Activated naive CD4-positive, alpha-beta T cell treated with anti-CD3 and anti-CD28 coated beads for 36 hours (primary cell): ENCODE measurements at regions of chr6 and their contacts with region 1.

Region 1: DNA sequence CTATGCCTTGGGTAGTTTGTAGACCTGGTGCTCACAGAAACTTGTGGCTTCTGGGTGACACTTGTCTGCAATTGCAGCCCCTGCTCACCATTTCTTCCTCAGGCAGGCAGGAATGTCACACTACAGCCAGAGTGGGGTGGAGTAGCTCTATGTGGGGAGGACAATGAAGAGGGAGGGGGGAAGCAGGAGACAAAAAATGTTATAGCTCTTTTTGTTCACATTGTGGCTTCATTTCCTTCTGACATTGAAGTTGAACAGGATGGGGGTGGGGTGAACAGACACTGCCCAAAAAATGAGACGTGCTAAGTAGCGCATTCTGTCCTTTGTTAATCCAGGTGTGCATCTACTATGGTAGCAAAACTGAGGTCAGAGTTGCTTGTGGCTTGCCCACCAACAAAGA is at the start of gene THEMIS:
- DNase-seq: peak; percentile 52
- H3K4me3 Mint-ChIP-seq: peak within 1 kb of the TSS; percentile 81
- H3K27ac Mint-ChIP-seq: peak within 1 kb of the TSS; percentile 94
- H3K4me1 Mint-ChIP-seq: peaks cover 57% of the 10 kb centered on the region
- H3K27me3 Mint-ChIP-seq: no peaks in the 10 kb centered on the region
- total RNA-seq, gene THEMIS: 7.0 to 7.4 TPM

Region 2: DNA sequence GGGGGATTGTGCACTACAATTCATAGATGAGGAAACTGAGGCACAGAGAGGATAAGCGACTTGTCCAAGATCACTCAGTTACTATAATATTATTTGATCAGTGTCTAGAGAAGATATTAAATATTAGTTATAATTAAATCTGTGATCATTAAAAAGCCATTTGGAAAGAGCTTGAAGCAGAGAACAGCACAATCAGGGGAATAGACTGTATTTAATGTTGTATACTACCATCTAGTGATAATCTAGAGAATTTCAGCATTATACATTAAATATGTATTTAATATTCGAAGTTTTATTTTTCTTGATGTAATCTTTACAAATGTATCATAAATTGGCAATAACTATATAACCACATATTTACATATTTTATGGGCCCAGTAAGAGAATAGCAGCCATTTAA is 361.7 kb before region 1 on chr6:
- CTCF ChIA-PET with region 1: no interaction called
- intact Hi-C with region 1: no loop called
- DNase-seq: no peak
- H3K4me3 Mint-ChIP-seq: no peak overlapping the region
- H3K27ac Mint-ChIP-seq: no peak overlapping the region
- H3K4me1 Mint-ChIP-seq: no peaks in the 10 kb centered on the region
- H3K27me3 Mint-ChIP-seq: peaks cover 13% of the 10 kb centered on the region

Region 3: DNA sequence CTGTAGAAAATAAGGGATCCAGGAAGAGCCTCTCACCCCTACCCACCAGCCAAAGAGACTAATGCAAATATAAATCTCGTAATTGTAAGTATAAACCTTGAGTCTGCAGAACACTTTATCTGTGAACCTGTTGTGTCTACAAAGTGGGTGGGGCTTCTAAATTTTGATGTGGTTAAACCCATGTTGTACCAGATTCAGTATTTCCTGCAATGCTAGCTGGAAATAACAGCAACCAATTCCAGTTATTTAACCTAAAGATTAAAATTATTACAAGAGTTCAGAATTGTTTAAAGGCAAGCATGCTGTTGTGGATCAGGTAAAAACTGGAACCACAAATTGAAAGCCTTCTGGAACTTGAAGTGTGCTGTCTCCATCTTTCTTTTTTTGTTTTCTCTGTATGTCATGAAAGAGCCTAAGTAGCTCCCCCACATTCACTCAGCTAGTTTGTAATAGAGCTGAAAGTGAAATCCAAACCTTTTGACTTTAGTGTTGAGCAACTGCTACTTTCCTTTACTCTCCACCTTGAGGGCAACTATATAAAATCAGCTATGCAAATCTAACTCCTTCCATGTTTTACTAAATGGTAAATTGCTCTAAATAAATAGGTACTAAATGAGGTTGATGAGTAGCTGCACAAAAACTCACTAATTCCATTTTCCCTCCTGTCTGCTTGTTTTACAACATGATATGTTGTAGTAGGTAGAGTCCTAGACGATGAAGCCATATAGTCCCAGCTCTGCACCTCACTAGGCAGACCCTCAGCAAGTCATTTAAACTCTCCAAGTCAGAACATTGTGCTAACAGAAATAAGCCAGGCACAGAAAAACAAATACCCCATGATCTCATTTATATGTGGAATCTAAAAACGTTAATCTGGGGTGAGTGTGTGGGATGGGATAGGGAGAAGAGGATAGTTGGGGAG is 17.8 kb after region 1 on chr6:
- CTCF ChIA-PET with region 1: interaction called, 4 read pairs
- intact Hi-C with region 1: loop called (anchors 1 kb)
- DNase-seq: no peak
- H3K4me3 Mint-ChIP-seq: peak overlapping the region; percentile 32
- H3K27ac Mint-ChIP-seq: peak overlapping the region; percentile 31
- H3K4me1 Mint-ChIP-seq: peaks cover 80% of the 10 kb centered on the region
- H3K27me3 Mint-ChIP-seq: no peaks in the 10 kb centered on the region

Region 4: DNA sequence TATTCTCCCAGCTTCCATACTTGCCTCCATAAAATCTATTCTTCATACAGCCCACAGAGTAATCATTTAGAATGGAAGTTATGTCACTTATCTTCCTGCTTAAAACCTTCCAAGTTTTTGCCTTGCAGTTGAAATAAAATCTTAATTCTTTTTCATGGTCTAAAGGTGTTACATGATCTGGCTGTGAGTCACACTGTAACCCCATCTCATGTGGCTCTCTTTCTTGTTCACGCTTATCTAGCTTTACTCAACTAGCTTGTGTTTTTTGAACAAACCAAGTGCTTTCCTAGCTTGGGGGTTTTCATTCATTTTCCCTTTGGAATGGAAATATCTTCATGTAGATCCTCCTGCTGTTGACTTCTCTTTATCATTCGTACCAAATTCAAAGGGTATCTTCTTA is 23.5 kb after region 1 on chr6:
- CTCF ChIA-PET with region 1: no interaction called
- intact Hi-C with region 1: loop called (anchors 1 kb)
- DNase-seq: peak; percentile 40
- H3K4me3 Mint-ChIP-seq: peak overlapping the region; percentile 5
- H3K27ac Mint-ChIP-seq: peak overlapping the region; percentile 61
- H3K4me1 Mint-ChIP-seq: peaks cover 59% of the 10 kb centered on the region
- H3K27me3 Mint-ChIP-seq: no peaks in the 10 kb centered on the region

Region 5: DNA sequence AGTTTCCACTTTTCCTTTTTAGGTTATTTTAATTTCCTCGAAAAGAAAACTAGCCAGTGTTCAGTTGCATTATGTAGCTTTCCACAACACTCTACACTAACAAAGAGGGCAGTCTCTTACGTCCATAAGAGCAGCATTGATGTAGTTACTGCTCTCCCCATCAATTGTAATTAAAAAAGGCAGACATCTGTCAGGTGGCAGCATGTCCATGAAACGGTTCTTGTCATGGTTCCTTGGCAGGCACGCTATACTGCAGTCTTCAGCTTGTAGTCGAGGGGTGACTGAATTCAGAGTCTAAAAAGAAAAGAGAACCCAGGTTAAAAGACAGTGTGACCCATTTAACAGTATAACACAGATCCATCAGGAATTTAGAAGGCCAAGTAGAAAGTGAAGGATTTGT is 80.1 kb after region 1 on chr6:
- CTCF ChIA-PET with region 1: no interaction called
- intact Hi-C with region 1: no loop called
- DNase-seq: no peak
- H3K4me3 Mint-ChIP-seq: no peak overlapping the region
- H3K27ac Mint-ChIP-seq: no peak overlapping the region
- H3K4me1 Mint-ChIP-seq: peaks cover 19% of the 10 kb centered on the region
- H3K27me3 Mint-ChIP-seq: no peaks in the 10 kb centered on the region